GM10248 (cell line): ENCODE measurements at regions of chr6 and their contacts with region 1.

Region 1: DNA sequence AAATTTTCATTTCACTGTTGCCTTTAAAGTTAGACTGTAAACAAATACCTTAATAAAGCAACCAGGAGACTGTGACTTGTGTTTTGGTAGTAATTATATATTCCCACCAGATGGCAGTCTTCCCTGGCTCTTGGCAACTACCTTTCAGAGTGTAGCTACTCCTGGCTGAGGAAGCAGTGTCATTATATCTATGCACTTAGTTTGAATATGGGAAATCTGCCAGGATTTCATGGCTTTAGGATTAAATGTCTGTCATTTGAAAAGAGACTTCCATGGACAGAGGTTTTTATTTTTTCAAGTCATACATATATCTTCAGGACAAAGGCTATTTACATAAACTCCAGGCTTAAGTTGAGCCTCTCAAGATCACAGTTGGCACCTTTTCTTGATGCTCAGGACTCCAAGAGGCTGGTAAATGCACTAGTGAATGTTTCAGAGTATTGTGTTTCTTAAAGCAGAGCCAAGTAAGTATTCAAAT is 160.1 kb downstream of the C6orf58 start:
- DNase-seq: peak; percentile 32
- CTCF ChIP-seq: peak; percentile 54

Region 2: DNA sequence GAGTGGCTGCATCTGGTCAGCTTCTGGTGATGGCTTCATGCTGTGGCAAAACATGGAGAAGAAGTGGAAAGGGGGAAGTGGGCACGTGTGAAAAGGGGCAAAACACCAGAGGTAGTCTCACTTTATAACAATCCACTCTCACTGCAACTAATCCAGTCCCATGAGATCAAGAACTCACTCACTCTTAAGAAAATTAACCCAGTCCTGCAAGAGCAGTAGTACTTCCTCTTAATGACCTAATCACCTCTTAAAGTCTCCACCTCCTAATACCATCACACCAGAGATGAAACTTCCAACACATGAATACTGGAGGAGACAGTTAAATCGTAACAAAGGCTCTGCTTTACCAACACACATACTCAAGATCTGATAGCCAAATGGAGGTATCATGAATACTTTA is 11.2 kb after region 1 on chr6:
- CTCF ChIA-PET with region 1: interaction called, 13 read pairs
- POLR2A ChIA-PET with region 1: no interaction called
- DNase-seq: no peak
- CTCF ChIP-seq: no peak

Region 3: GRCh38 chr6:127811900-127812570 is 75.0 kb after region 1 on chr6:
- CTCF ChIA-PET with region 1: no interaction called
- POLR2A ChIA-PET with region 1: no interaction called
- DNase-seq: no peak
- CTCF ChIP-seq: no peak

Region 4: GRCh38 chr6:128327890-128328289 is 590.8 kb after region 1 on chr6:
- CTCF ChIA-PET with region 1: interaction called, 17 read pairs
- POLR2A ChIA-PET with region 1: no interaction called
- DNase-seq: peak; percentile 5
- CTCF ChIP-seq: peak; percentile 62

Region 5: DNA sequence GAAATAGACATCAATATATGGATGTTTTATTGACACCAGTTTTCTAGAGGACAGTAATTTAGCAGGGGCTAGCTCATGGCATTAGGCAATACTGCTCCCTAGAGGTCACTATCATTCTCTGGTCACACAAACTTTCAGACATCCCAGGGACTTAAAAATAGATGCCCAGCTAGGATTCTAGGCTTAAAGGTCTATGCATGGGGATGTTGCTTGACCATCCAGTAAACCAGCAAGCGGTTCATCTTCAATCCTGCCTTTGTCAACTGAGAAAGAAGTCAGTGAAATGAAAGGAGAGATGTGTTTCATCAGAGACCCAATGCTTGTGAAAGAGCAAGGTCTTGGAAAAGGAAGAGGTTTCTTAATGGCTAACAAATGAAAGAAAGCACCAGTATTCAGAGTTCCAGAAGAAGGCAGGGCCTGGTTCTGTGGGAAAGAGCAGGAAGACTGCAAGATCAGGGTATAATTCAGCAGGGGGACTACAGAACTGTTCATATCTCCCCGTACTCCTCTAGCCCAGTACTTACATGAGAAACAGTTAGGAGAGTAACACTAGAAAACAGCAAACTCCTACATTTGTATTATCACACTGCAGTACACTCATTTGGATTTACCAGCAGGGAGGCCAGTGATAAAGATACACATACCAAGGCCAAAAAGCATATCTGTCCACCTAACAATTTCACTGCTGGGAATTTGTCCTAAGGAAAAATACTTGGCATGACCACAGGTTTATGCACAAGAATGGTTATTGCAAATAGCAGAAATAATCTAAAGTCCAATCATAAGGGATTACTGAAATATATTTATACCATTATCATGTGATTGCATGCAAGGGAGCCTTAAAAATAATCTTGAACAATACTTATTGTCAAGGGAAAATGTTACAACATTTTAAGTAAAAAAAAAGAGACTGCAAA is 994.5 kb after region 1 on chr6:
- CTCF ChIA-PET with region 1: interaction called, 15 read pairs
- POLR2A ChIA-PET with region 1: no interaction called
- DNase-seq: peak; percentile 13
- CTCF ChIP-seq: peak; percentile 37